ENCODE measurements at regions of chr5 and their contacts with region 1.

Region 1: DNA sequence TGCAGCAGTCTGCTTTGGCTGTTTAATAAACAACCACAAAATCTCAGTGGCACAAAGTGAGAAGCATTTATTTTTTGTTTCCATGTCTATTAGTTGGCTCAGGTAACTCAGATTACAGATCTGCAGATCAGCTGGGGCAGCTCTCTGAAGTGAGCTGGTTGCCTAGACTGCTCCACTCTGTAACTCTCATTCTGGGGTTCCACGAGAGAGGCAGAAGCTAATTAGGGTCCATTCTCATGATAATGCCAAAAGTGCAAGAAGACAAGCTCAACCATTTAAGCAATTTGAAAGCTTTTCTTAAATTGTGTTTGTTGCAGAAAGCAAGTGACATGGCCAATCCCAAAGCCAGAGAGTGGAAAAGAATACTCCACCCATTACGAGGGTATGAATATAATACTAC is 13.2 kb downstream of the MEIKIN start:
- DNase-seq: no peak
- H3K4me3 Mint-ChIP-seq: no peak overlapping the region
- H3K27ac Mint-ChIP-seq: no peak overlapping the region
- H3K4me1 Mint-ChIP-seq: no peaks in the 10 kb centered on the region
- H3K27me3 Mint-ChIP-seq: peaks cover 53% of the 10 kb centered on the region
- CTCF ChIP-seq: no peak

Region 2: GRCh38 chr5:131693894-131694293 is 238.3 kb before region 1 on chr5:
- CTCF ChIA-PET with region 1: no interaction called
- intact Hi-C with region 1: loop called (anchors 10 kb)
- DNase-seq: no peak
- H3K4me3 Mint-ChIP-seq: no peak overlapping the region
- H3K27ac Mint-ChIP-seq: no peak overlapping the region
- H3K4me1 Mint-ChIP-seq: no peaks in the 10 kb centered on the region
- H3K27me3 Mint-ChIP-seq: no peaks in the 10 kb centered on the region
- CTCF ChIP-seq: no peak